Right lobe of liver (tissue), 6 donors: ENCODE measurements at regions of chr3 and their contacts with region 1.

Region 1: DNA sequence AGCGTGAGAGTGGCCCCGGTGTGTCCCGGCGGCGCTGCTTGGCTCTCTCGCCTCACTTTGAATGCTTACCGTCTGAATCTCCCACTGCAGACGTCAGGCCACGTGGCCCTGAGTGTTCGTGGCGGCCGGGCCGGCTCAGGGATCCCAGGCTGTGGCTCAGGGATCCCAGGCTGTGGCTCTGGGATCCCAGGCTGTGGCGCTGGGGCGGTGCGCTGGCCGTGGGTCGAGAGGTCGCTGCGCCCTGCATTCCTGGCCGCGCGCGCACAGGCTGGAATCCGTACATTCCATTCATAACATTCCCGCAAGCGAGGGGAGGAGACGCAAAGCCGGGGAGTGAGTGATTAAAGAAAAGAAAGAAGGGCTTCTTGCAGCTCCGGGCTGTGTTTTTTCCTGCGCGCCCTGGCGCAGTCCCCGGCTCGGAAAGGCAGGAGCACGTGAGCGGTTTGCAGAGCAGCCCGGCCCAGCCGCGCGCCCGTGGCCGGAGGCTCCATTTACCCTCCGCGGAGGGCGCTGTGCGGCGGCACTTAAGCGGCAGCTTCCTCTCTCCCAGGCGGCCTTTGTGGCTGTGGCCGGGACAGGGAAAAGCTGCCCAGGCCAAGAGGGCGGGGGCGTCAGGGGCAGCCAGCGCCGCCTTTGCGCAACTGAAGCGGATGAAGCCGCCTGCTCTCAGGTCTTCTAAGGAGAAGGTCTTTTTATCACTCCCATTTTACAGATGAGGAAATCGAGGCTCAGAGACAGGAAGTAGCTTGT is 87.0 kb upstream of the ALDH1L1 start:
- DNase-seq: peak; percentile 78 to 91 (median 90)
- ATAC-seq: peak; percentile 77 to 83 (median 78)
- H3K4me3 ChIP-seq: peak overlapping the region; percentile 38 to 48 (median 45)
- H3K27ac ChIP-seq: peak overlapping the region; percentile 57 to 88 (median 78)
- H3K4me1 ChIP-seq: peaks cover 0 to 45% (median 19%) of the 10 kb centered on the region in 4 donors
- H3K27me3 ChIP-seq: no peaks in the 10 kb centered on the region
- CTCF ChIP-seq: peak; percentile 9 to 40 (median 32)
- POLR2A ChIP-seq: peak; percentile 82

Region 2: GRCh38 chr3:126049267-126050049 is 217.9 kb before region 1 on chr3:
- intact Hi-C with region 1: no loop called
- DNase-seq: no peak
- ATAC-seq: peak in 2 of 4 donors; percentile 47 to 57
- H3K4me3 ChIP-seq: no peak overlapping the region
- H3K27ac ChIP-seq: no peak overlapping the region
- H3K4me1 ChIP-seq: peaks cover 0 to 6% (median 0%) of the 10 kb centered on the region in 4 donors
- H3K27me3 ChIP-seq: no peaks in the 10 kb centered on the region
- CTCF ChIP-seq: no peak
- POLR2A ChIP-seq: no peak

Region 3: DNA sequence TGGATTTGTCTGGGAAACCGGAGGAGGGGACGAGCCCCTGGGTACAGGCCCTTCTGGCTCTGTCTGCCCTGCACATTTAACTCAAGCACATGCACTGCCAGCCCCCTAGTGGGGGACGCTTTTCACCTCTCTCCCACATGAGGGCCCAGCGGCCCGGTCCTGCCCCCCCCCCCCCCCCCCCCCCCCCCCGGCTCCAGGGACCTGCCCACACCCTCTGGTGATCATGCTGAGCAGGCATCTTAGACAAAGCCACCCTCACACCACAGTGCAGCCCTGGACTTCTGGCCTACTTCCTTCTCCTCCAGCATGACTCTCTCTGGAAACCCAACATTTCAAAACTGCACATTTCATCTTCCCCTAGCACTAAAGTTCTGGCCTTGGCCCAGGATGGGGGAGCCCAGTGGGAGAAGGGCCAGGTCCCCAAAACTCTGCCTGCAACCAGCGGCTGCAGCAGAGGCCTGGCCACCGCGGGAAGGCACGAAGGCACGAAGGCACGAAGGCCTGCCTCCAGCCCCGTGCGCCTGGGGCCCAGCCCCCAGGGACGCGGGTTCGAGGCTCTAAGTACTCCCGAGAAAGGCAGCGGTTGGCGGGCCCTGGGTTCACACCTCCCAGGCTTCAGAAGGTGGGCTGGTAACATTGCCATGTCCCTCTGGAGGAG is 75.7 kb after region 1 on chr3:
- intact Hi-C with region 1: loop called in 1 of 2 experiments (anchors 10 kb)
- DNase-seq: peak in 1 of 3 donors; percentile 51
- ATAC-seq: peak; percentile 2 to 5 (median 3)
- H3K4me3 ChIP-seq: no peak overlapping the region
- H3K27ac ChIP-seq: peak overlapping the region in 2 of 3 donors; percentile 56 to 95
- H3K4me1 ChIP-seq: peaks cover 0 to 72% (median 34%) of the 10 kb centered on the region in 4 donors
- H3K27me3 ChIP-seq: no peaks in the 10 kb centered on the region
- CTCF ChIP-seq: no peak
- POLR2A ChIP-seq: no peak

Region 4: GRCh38 chr3:126373682-126374601 is 106.5 kb after region 1 on chr3:
- intact Hi-C with region 1: loop called in 1 of 2 experiments (anchors 10 kb)
- DNase-seq: peak; percentile 60 to 92 (median 88)
- ATAC-seq: peak; percentile 65 to 75 (median 69)
- H3K4me3 ChIP-seq: no peak overlapping the region
- H3K27ac ChIP-seq: peak overlapping the region in 2 of 3 donors; percentile 74 to 82
- H3K4me1 ChIP-seq: peaks cover 0 to 35% (median 12%) of the 10 kb centered on the region in 4 donors
- H3K27me3 ChIP-seq: no peaks in the 10 kb centered on the region
- CTCF ChIP-seq: no peak
- POLR2A ChIP-seq: no peak